Heart right ventricle (tissue), 16 donors: ENCODE measurements at regions of chr12 and their contacts with region 1.

Region 1: DNA sequence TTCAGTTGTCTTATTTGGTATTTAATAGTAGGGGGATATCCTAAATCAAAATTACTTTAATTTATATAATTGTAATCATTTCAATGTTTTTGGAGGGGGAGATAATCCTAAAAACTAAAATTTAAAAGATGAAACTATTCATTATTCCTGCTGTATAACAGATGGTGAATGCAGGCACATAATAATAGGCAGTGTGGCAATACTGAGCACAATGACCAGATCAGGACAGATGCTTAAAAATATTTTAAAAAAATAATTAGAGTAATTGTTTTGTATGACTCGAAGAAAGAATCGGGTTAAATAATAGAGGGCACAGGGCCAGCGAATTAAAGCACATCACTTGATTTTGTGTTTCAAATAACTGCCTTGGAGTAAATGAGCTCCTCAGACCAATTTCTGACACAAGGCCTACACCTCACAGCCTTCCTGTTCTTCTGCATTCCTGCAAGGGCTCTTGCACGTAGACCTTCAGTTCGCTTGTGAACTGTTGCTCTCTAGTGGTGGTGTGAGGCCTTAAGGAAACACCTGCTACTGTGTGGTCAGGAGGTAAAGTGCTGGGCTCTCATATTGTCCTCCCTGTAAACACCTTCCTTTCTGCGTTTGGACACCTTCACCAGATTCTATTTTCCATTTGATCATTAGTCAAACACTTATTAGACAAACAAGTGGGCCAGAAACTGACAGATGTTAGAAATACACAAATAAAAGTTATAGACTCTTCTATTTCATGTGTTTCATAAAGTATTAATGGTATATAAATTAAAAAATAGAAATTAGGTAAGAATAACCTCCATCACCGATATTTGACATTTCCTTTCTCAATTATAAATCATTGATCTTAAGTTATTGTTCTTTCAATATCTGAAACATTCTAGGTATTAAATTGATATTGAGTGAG is 29.3 kb upstream of the KLRF1 start:
- DNase-seq: no peak
- ATAC-seq: peak in 5 of 8 donors; percentile 55 to 92 (median 64)
- H3K4me3 ChIP-seq: no peak overlapping the region
- H3K27ac ChIP-seq: no peak overlapping the region
- H3K4me1 ChIP-seq: peaks cover 0 to 36% (median 0%) of the 10 kb centered on the region in 9 donors
- H3K27me3 ChIP-seq: no peaks in the 10 kb centered on the region
- CTCF ChIP-seq: peak in 7 of 9 donors; percentile 27 to 61 (median 43)

Region 2: GRCh38 chr12:9750276-9751203 is 47.4 kb before region 1 on chr12:
- intact Hi-C with region 1: loop called in 5 of 10 experiments (anchors 2 to 5 kb)
- DNase-seq: peak in 1 of 2 donors; percentile 48
- ATAC-seq: peak in 7 of 8 donors; percentile 71 to 92 (median 78)
- H3K4me3 ChIP-seq: peak overlapping the region in 6 of 10 donors; percentile 6 to 29 (median 19)
- H3K27ac ChIP-seq: no peak overlapping the region
- H3K4me1 ChIP-seq: peaks cover 0 to 14% (median 0%) of the 10 kb centered on the region in 9 donors
- H3K27me3 ChIP-seq: no peaks in the 10 kb centered on the region
- CTCF ChIP-seq: peak; percentile 68 to 91 (median 84)

Region 3: DNA sequence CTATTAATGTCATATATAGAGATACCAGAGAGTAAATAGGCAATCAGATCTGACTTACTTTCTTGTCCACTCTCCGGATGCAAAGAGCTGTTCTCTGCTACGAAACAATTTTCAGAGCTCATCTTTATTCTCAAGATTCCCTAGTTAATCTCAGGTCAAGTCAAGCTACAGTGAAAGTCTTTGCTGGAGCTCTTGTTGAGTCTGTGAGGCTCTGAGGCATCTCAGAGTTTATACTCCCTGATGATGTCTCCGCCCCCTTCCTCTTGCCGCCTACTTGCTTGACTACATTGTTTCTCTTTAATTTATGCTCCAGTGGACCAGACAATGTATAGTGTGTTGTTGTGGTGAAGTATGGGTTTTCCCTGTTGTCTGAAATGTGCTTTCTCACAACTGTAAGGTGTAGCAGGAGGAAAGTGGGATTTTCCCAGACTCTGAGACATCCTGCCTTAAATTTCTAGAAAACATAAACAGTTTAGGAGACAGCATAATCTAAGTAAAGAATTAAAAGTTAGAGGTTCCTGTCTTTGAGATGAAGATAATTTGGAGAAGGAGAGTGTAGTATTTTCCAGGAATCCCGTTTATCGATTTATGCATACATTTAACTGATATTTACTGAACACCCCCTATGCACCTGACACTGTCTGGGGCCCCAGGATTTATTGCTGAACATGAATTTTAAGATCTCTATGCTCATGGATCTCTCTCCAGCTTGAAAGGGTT is 37.1 kb before region 1 on chr12 and contains the start of gene CD69:
- intact Hi-C with region 1: loop called in 1 of 10 experiments (anchors 5 kb)
- DNase-seq: no peak
- ATAC-seq: peak in 5 of 8 donors; percentile 32 to 56 (median 42)
- H3K4me3 ChIP-seq: peak within 1 kb of the TSS in 1 of 10 donors; percentile 57
- H3K27ac ChIP-seq: peak within 1 kb of the TSS in 3 of 10 donors; percentile 17 to 82 (median 42)
- H3K4me1 ChIP-seq: peaks cover 0 to 31% (median 0%) of the 10 kb centered on the region in 9 donors
- H3K27me3 ChIP-seq: no peaks in the 10 kb centered on the region
- CTCF ChIP-seq: no peak
- total RNA-seq, gene CD69: 0.17 to 6.2 (median 0.50) TPM in 8 of 10 donors, not detected in the others